Tibial artery (tissue), 4 donors: ENCODE measurements at regions of chr19 and their contacts with region 1.

Region 1: GRCh38 chr19:4638828-4639530 is at the start of gene TNFAIP8L1:
- DNase-seq: peak; percentile 94 to 96
- H3K4me3 ChIP-seq: peak within 1 kb of the TSS; percentile 55 to 61
- H3K27ac ChIP-seq: peak within 1 kb of the TSS; percentile 6 to 62
- H3K4me1 ChIP-seq: peaks cover 0 to 34% (median 25%) of the 10 kb centered on the region in 4 donors
- H3K27me3 ChIP-seq: peaks cover 0 to 20% of the 10 kb centered on the region in 2 donors
- CTCF ChIP-seq: no peak

Region 2: DNA sequence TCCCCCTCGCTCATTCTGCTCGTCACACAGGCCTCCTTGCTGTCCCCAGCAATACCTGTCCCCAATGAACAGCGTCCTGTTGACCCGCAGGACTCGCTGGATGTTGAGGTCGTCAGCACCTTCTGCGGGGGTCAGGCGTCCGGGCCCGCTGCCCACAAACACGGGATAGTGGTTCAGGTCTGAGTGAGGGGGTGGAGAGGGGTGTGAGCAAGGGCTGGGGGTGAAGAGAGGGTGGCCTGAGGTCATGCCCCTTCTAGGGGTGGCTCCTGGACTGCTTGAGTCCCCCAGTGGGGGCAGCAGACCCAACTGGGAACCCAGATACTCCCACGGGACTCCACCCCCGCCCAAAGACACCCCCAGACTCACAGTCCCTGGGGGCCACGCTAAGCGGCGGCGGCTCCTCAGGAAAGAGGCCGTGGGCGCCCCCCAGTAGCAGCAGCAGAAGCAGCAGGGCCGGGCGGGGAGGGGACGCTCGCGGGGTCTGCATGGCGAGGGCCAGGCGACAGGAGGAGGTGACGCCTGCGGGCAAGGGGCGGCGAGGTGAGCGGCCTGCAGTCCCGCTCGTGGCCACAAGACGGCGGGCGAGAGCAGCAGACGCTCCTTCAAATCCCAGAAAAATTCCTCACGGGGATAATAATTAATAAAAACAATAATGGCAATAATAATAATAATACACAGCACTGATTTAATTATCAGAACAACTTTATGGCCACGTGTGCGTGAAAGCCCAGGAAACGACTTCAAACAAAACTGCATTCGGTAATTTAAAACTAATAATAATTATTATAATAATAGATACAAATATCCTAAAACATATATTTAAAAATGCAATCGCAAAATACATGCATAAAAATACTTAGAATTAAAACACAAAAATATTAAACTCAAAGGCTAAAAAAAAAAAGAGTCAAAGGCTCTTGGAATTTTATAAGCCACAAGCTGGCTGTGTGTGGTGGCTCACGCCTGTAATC is 80.7 kb before region 1 on chr19:
- intact Hi-C with region 1: loop called (anchors 5 kb)
- DNase-seq: no peak
- H3K4me3 ChIP-seq: peak overlapping the region in 1 of 2 donors; percentile 34
- H3K27ac ChIP-seq: no peak overlapping the region
- H3K4me1 ChIP-seq: no peaks in the 10 kb centered on the region
- H3K27me3 ChIP-seq: peaks cover 0 to 30% of the 10 kb centered on the region in 2 donors
- CTCF ChIP-seq: peak; percentile 86 to 100

Region 3: DNA sequence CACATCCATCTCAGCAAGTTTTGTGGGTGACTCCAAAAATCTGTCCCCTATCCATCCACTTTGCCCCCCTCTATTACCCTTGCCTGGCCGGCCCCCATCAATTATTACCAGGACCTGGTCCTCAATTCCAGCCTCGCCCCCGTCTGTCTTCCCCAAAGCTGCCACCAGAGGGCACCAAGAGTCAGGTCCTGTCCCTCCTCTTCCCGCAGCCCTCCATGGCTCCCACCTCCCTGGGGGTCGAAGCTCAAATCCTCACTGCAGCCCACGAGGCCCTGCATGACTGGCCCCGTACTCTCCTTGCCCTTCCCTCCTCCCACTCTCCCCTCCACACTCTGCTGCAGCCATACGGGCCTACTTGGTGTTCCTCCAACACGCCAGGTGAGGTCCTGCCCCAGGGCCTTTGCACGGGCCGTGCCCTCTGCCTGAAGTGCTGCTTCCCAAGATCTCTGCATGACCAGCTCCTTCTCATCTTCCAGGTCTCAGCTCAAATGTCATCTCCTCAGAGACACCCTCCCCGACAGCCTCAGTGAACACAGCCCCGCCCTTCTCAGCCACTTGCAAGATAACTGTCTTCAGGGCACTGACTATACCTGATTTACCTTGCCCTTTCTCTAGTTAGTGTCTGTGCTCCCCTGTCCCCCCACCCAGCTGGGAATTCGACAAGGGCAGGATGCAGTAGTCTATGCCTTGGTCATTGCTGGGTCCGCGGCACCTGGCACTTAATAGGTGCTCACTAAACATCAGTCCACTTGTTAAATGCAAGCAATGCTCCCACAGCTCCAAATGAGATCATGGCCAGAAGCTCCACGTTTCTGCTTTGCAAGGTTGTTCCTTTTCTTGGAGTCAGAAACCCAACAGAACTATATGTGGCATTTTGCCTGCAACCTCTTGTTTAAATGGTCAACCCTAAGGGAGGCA is 62.7 kb before region 1 on chr19:
- intact Hi-C with region 1: loop called (anchors 5 kb)
- DNase-seq: peak in 1 of 2 donors; percentile 51
- H3K4me3 ChIP-seq: no peak overlapping the region
- H3K27ac ChIP-seq: no peak overlapping the region
- H3K4me1 ChIP-seq: peaks cover 0 to 25% (median 10%) of the 10 kb centered on the region in 4 donors
- H3K27me3 ChIP-seq: peaks cover 0 to 95% of the 10 kb centered on the region in 2 donors
- CTCF ChIP-seq: peak; percentile 42 to 49

Region 4: DNA sequence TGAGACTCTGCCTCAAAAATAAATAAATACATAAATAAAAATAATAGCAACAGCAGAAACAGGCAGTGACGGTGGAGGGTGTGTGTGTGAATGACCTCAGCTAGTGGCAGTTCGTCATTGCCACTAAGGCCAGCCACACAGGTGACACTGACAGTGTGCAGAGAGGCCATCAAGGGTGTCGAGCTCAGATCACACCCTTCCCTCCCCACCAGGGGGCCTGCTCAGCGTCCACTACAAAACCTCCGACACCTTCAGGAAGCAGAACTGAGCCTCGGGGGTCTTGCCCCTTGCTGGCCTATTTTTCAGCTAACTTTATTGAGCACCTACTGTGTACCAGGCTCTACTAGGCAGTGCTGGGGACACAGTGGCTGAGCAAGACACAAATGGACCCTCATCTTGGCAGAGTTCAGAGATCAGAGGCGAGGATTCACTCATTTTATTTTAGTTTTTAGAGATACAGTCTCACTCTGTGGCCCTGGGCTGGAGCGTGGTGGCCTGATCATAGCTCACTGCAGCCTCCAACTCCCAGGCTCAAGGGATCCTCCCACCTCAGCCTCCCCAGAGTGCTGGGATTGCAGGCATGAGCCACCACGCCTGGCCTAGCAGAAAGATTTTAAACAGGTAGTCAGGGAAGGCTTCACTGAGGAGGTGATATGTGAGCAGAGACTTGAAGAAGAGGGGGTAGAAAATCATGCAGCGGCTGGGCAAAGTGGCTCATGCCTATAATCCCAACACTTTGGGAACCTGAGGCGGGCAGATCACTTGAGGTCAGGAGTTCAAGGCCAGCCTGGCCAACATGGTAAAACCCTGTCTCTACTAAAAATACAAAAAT is 49.2 kb before region 1 on chr19:
- intact Hi-C with region 1: no loop called
- DNase-seq: no peak
- H3K4me3 ChIP-seq: no peak overlapping the region
- H3K27ac ChIP-seq: no peak overlapping the region
- H3K4me1 ChIP-seq: peaks cover 0 to 2% (median under 1%) of the 10 kb centered on the region in 4 donors
- H3K27me3 ChIP-seq: peaks cover 2 to 82% of the 10 kb centered on the region in 2 donors
- CTCF ChIP-seq: peak in 1 of 2 experiments; percentile 8